Common myeloid progenitor, CD34-positive (primary cell): ENCODE measurements at regions of chr19 and their contacts with region 1.

Region 1: DNA sequence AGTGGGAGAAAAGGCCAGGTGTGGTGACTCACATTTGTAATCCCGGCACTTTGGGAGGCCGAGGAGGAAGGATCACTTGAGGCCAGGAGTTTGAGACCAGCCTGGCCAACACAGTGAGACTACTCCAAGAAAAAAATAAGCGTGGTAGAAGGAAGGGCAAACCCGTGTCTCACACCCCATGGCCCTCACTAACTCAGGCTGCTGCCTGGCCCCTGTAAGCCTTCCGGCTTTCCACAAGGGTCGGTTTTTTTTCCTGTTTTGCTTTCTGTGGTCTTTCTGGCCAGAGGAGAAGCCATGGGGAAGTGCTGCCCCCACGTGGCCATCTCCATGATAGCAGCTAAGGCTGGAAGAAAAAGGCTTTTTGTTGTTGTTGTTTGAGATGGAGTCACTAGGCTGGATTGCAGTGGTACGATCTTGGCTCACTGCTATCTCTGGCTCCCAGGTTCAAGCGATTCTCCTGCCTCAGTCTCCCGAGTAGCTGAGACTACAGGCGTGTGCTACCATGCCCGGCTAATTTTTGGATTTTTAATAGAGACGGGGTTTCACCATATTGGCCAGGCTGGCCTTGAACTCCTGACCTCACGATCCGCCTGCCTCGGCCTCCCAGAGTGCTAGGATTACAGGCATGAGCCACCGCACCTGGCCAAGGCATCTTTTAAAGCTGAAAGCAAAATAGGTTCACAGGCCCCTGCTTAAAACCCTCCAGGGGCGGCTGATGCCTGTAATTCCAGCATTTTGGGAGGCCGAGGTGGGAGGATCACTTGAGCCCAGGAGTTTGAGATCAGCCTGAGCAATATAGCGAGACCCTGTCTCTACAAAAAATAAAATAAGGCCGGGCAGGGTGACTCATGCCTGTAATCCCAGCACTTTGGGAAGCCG is 7.5 kb upstream of the ARHGEF18 start:
- DNase-seq: peak; percentile 79 to 88 (median 83)
- H3K4me3 ChIP-seq: no peak overlapping the region
- H3K27ac ChIP-seq: no peak overlapping the region
- H3K4me1 ChIP-seq: peaks cover 19 to 60% (median 50%) of the 10 kb centered on the region in 4 experiments
- H3K27me3 ChIP-seq: no peaks in the 10 kb centered on the region

Region 2: GRCh38 chr19:7101498-7102253 is 239.5 kb before region 1 on chr19:
- CTCF ChIA-PET with region 1: interaction called, 16 read pairs
- POLR2A ChIA-PET with region 1: no interaction called
- DNase-seq: no peak
- H3K4me3 ChIP-seq: no peak overlapping the region
- H3K27ac ChIP-seq: no peak overlapping the region
- H3K4me1 ChIP-seq: peaks cover 2 to 21% (median 9%) of the 10 kb centered on the region in 4 experiments
- H3K27me3 ChIP-seq: no peaks in the 10 kb centered on the region

Region 3: DNA sequence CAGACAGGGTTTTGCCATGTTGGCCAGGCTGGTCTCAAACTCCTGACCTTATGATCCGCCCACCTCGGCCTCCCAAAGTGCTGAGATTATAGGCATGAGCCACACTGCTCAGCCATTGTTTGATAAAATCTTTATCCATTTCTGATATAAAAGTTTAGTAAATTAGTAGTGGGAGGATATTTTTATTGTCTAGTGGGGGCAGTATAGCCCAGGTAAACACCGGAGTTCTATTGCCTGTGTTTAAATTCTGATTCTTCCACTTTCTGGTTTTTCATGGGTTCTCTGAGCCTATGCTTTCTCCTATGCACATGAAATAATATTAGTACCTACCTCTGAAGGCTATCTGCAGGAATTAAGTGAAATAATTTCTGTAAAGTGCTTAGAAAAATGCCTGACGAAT is 12.6 kb before region 1 on chr19:
- CTCF ChIA-PET with region 1: interaction called, 34 read pairs
- POLR2A ChIA-PET with region 1: no interaction called
- DNase-seq: peak in 1 of 3 donors; percentile 46
- H3K4me3 ChIP-seq: no peak overlapping the region
- H3K27ac ChIP-seq: no peak overlapping the region
- H3K4me1 ChIP-seq: peaks cover 0 to 8% (median 3%) of the 10 kb centered on the region in 4 experiments
- H3K27me3 ChIP-seq: no peaks in the 10 kb centered on the region